ENCODE measurements at regions of chr20 and their contacts with region 1.

Region 1: GRCh38 chr20:63537525-63538203 is 488 bp upstream of the PTK6 start:
- DNase-seq: peak; percentile 87
- ATAC-seq: peak; percentile 84
- H3K4me3 Mint-ChIP-seq: peak overlapping the region; percentile 49
- H3K27ac Mint-ChIP-seq: no peak overlapping the region
- H3K4me1 Mint-ChIP-seq: 0 out of 2 replicates have a peak, but pooled peaks cover 2% of the 10 kb centered on the region
- H3K27me3 Mint-ChIP-seq: no peaks in the 10 kb centered on the region
- CTCF ChIP-seq: peak; percentile 93

Region 2: DNA sequence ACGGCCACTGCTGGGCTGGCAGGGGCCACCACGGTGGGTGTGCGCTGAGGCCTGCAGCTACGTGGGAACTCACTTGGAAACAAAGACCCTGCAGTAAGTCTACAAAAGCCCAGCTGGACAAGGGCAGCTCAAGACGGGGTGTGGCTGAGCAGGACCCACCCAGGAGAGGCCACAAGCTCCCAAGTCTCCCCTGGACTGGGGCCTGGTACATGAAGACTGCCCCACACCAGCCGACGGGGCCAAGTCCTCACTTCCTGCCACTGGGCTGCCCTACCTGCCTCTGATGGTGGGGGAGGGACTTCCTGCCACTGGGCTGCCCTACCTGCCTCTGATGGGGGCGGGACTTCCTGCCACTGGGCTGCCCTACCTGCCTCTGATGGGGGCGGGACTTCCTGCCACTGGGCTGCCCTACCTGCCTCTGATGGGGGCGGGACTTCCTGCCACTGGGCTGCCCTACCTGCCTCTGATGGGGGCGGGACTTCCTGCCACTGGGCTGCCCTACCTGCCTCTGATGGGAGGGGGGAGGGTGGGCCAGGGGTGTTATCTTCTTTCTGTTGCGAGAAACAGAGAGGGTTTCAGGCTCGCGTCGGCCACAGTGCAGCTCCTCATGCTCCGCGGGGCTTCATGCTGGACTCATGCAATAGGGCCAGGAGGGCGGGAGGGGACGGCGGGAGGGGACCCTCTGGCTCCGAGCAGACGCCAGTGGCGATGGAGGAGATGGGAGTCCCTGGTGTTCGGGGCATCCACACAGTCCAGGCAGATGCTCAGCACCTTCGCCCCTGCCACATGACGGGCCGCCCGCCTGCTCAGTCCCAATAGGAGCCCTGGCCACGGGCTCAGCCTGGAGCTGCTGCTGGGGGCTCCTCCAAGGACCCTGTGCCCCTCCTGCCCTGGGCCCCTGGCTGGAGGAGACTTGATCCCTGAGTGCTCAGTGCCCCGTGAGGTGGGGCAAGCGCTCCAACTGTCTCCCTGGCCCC is 127.9 kb before region 1 on chr20:
- CTCF ChIA-PET with region 1: no interaction called
- POLR2A ChIA-PET with region 1: no interaction called
- DNase-seq: peak; percentile 62
- ATAC-seq: peak; percentile 67
- H3K4me3 Mint-ChIP-seq: peak overlapping the region; percentile 27; the same call in 1 of the 2 replicates
- H3K27ac Mint-ChIP-seq: peak overlapping the region; percentile 49; the same call in 1 of the 2 replicates
- H3K4me1 Mint-ChIP-seq: 0 out of 2 replicates have a peak, but pooled peaks cover 6% of the 10 kb centered on the region
- H3K27me3 Mint-ChIP-seq: no peaks in the 10 kb centered on the region
- CTCF ChIP-seq: no peak

Region 3: DNA sequence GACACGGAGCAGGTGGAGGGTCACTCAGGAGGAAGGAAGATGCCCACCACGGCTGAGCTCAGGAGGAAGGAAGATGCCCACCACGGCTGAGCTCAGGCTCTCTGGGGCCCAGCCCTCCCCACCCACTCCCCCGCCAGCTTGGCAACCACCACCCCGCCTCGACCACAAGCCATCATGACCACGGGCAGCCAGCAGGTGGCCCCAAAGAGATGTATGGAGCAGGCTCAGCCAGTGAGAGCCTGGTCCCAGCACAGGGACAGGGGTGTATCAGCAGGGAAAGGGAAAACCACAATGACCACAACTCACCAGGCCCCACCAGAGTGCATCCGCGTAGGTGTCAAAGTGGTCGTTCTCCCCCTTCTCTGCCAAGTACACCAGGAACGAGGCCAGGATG is 95.6 kb before region 1 on chr20:
- CTCF ChIA-PET with region 1: interaction called, 12 read pairs
- POLR2A ChIA-PET with region 1: no interaction called
- DNase-seq: peak; percentile 77
- ATAC-seq: peak; percentile 79
- H3K4me3 Mint-ChIP-seq: no peak overlapping the region
- H3K27ac Mint-ChIP-seq: no peak overlapping the region
- H3K4me1 Mint-ChIP-seq: peaks cover 2% of the 10 kb centered on the region
- H3K27me3 Mint-ChIP-seq: no peaks in the 10 kb centered on the region
- CTCF ChIP-seq: 0 out of 2 replicates have a peak, but pooled peaks have one; percentile 23

Region 4: DNA sequence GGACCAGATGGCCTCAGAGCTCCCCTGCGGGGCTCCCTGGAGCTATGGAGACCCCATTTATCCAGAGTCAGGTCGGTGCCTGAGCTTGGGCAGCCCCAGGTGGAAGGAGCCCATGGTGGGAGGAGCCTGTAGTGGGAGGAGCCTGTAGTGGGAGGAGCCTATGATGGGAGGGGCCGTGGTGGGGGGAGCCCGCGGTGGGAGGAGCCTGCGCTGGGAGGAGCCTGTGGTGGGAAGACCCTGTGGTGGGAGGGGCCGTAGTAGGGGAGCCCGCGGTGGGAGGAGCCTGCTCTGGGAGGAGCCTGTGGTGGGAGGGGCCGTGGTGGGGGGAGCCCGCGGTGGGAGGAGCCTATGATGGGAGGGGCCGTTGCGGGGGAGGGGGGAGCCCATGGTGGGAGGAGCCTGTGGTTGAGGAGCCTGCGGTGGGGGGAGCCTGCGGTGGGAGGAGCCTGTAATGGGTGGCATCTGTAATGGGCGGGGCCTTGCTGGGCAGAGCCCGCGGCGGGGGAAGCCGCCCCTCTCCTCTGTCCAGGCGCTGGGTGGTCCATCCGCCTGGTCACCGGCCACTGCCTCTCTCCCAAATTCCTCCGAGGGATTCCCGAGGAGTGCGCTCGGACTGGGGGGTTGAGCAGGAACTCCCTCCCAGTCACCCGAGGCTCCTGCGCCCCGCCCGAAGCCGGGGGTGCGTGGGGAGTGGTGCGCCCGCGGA is 15.7 kb after region 1 on chr20:
- CTCF ChIA-PET with region 1: interaction called, 48 read pairs
- POLR2A ChIA-PET with region 1: interaction called, 4 read pairs
- DNase-seq: peak; percentile 97
- ATAC-seq: peak; percentile 85
- H3K4me3 Mint-ChIP-seq: peak overlapping the region; percentile 68
- H3K27ac Mint-ChIP-seq: no peak overlapping the region
- H3K4me1 Mint-ChIP-seq: peaks cover 22% of the 10 kb centered on the region
- H3K27me3 Mint-ChIP-seq: no peaks in the 10 kb centered on the region
- CTCF ChIP-seq: no peak

Region 5: GRCh38 chr20:63641792-63642544 is 104.3 kb after region 1 on chr20:
- CTCF ChIA-PET with region 1: interaction called, 81 read pairs
- POLR2A ChIA-PET with region 1: no interaction called
- DNase-seq: peak; percentile 97
- ATAC-seq: peak; percentile 77
- H3K4me3 Mint-ChIP-seq: peak overlapping the region; percentile 72
- H3K27ac Mint-ChIP-seq: no peak overlapping the region
- H3K4me1 Mint-ChIP-seq: peaks cover 9% of the 10 kb centered on the region
- H3K27me3 Mint-ChIP-seq: no peaks in the 10 kb centered on the region
- CTCF ChIP-seq: no peak

Region 6: DNA sequence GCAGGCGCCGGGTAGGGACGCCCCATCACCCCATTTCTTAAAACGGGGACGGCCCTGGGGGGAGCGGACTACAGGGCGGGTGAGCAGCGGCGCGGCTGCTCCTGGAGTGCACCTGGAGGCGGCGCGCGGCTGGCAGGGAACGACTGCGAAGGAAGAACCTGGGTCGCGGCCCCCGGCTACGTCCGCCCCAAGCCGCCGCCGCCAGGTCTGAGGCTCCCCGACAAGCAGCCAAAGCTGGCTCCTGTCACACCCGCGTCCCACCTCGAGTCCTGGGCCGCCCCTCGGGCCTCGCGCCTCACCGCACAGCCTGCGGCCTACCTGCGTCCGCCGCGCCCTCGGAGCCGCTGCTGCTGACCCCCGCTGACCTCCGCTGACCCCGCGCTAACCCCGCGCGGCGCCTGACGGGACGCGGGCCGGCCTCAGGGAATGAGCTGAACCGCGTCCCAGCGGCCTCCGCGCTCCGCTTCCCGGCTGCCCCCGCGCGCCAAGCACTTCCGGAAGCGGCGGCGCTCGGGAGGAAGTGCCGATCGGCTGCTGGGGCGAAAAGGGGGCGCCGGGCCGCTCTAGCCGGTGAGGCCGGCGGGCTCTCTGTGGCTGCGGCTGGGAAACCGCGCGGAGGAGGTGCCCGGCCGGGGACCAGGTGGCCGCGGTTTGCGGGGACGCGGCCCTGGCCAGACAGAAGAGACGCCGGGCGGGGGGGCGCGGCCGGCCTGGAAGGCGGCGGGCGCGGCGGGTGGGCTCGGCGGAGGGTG is 170.1 kb after region 1 on chr20 and contains the starts of genes ARFRP1 and ZGPAT:
- CTCF ChIA-PET with region 1: interaction called, 25 read pairs
- POLR2A ChIA-PET with region 1: no interaction called
- DNase-seq: peak; percentile 84
- ATAC-seq: peak; percentile 92
- H3K4me3 Mint-ChIP-seq: peak within 1 kb of the TSS; percentile 80
- H3K27ac Mint-ChIP-seq: peak within 1 kb of the TSS; percentile 58
- H3K4me1 Mint-ChIP-seq: peaks cover 10% of the 10 kb centered on the region
- H3K27me3 Mint-ChIP-seq: no peaks in the 10 kb centered on the region
- CTCF ChIP-seq: no peak
- total RNA-seq, gene ARFRP1: 24.3 to 30.2 TPM (median 27.4 TPM) in 3 replicates
- total RNA-seq, gene ZGPAT: 28.3 to 31.0 TPM (median 30.4 TPM) in 3 replicates

Region 7: DNA sequence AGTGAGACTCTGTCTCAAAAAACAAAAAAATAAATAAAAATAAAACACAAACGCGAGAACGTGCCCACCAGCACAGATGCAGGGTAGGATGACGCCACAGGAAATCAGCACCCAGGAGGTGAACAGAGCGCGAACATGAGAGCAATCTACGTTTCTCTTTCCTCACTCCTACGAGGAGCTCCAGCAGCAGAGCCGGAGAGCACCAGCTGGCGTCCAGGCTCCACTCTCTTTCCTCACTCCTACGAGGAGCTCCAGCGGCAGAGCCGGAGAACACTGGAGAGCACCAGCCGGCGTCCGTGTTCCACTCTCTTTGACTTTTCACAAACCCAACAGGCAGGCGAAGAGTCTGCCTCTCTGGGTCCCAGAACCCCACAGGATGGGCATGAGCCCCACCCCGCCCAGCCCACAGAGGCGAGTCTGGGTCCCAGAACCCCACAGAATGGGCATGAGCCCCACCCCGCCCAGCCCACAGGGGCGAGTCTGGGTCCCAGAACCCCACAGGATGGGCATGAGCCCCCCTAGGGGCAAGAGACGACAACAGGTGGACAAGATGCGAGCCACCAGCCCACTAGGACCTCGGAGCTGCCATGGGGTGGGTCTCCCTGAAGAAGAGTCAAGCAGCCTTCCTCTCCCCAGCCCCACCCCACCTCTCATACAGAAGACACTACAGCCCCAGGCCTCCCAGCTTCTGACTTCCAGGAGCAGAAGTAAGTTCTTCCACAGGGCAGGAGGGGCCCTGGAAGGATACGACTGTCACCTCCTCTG is 273.2 kb after region 1 on chr20:
- CTCF ChIA-PET with region 1: no interaction called
- POLR2A ChIA-PET with region 1: no interaction called
- DNase-seq: no peak
- ATAC-seq: no peak
- H3K4me3 Mint-ChIP-seq: no peak overlapping the region
- H3K27ac Mint-ChIP-seq: peak overlapping the region; percentile 23; the same call in 1 of the 2 replicates
- H3K4me1 Mint-ChIP-seq: no peaks in the 10 kb centered on the region
- H3K27me3 Mint-ChIP-seq: no peaks in the 10 kb centered on the region
- CTCF ChIP-seq: no peak

Region 8: DNA sequence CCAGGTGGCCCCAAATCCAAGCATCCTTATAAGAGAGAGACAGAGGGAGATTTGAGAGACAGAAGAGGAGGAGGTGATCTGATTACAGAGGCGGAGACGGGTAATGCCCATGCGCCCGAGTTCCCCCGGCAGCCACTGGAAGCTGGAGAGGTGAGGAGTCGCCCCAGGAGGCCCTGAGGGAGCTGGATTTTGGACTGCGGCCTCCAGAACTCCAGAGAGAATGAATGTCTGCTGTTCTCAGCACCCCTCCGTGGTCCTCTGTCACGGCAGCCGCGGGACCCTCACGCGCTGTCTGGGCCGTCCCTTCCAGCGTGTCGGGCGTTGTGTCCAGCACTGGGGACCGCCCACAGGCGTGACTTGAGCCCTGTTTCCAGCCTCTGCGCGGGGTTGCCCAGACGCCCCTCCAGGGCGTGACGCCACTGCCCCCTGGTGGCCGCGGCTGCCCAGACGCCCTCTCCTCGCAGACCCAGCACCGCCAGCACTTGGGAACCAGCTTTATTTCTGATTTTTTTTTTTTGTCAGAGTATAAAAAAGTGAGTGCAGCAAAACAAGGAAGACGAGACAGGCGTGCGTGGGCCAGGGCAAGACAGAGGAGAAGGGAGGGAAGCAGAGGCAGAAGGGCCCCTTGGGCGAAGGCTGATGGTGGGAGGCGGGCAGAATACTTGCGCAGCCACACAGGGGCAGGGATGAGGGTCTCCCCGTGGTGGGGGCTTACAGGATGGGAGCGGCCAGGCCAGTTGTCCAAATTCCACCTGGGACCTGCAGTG is 436.2 kb after region 1 on chr20:
- CTCF ChIA-PET with region 1: interaction called, 28 read pairs
- POLR2A ChIA-PET with region 1: no interaction called
- DNase-seq: peak; percentile 89
- ATAC-seq: peak; percentile 70
- H3K4me3 Mint-ChIP-seq: peak overlapping the region; percentile 55
- H3K27ac Mint-ChIP-seq: no peak overlapping the region
- H3K4me1 Mint-ChIP-seq: peaks cover 18% of the 10 kb centered on the region
- H3K27me3 Mint-ChIP-seq: peaks cover 34% of the 10 kb centered on the region
- CTCF ChIP-seq: peak; percentile 98